CD14-positive monocyte (primary cell): ENCODE measurements at regions of chrX and their contacts with region 1.

Region 1: DNA sequence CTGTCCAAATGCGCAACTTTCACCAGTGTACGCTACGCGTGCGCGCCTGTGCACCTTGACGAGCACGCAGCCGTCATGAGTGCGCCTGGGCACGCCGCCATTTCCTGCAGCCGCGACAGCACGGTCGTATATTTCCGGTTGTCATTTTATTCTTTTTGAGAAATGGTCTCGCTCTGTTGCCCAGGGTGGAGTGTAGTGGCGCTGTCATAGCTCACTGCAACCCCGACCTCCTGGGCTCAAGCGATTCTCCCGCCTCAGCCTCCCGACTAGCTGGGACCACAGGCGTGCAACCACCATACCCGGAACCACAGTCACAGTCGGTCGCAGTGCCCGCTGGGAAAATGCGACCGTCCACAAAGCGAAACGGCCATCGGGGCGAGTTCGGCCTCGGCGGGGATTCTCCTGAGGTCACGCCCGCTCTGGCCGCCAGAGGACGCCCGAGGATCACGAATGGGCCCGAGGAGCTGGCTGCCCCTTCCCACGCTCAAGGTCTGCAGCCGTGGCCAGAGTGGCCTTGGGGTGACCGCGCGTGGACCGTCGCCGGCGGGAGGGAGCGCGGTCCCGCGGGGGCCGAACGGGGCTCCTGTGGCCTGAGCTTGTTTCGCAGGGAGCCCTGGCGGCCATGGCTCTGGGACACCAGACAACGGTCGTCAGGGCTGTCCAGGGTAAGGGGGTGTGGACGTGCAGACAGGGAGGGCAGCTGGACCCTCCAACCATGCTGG is 23.7 kb upstream of the PNMA3 start:
- DNase-seq: peak; percentile 68 to 71 (median 68)
- H3K4me3 ChIP-seq: peak overlapping the region; percentile 24 to 67 (median 48)
- H3K4me3 Mint-ChIP-seq: peak overlapping the region; percentile 81 to 88
- H3K27ac ChIP-seq: peak overlapping the region; percentile 50 to 84
- H3K27ac Mint-ChIP-seq: peak overlapping the region; percentile 87 to 97 (median 95)
- H3K4me1 ChIP-seq: peaks cover 7 to 8% of the 10 kb centered on the region in 2 donors
- H3K4me1 Mint-ChIP-seq: peaks cover 5% of the 10 kb centered on the region
- H3K27me3 ChIP-seq: no peaks in the 10 kb centered on the region
- H3K27me3 Mint-ChIP-seq: peaks cover 0 to 3% (median 0%) of the 10 kb centered on the region in 3 donors
- CTCF ChIP-seq: peak; percentile 82

Region 2: GRCh38 chrX:153507484-153508178 is 475.1 kb after region 1 on chrX:
- intact Hi-C with region 1: loop called (anchors 2 to 10 kb)
- DNase-seq: peak; percentile 60 to 69 (median 63)
- H3K4me3 ChIP-seq: no peak overlapping the region
- H3K4me3 Mint-ChIP-seq: no peak overlapping the region
- H3K27ac ChIP-seq: no peak overlapping the region
- H3K27ac Mint-ChIP-seq: no peak overlapping the region
- H3K4me1 ChIP-seq: no peaks in the 10 kb centered on the region
- H3K4me1 Mint-ChIP-seq: peaks cover 3% of the 10 kb centered on the region
- H3K27me3 ChIP-seq: no peaks in the 10 kb centered on the region
- H3K27me3 Mint-ChIP-seq: peaks cover 4 to 10% (median 4%) of the 10 kb centered on the region in 3 donors
- CTCF ChIP-seq: peak; percentile 65

Region 3: DNA sequence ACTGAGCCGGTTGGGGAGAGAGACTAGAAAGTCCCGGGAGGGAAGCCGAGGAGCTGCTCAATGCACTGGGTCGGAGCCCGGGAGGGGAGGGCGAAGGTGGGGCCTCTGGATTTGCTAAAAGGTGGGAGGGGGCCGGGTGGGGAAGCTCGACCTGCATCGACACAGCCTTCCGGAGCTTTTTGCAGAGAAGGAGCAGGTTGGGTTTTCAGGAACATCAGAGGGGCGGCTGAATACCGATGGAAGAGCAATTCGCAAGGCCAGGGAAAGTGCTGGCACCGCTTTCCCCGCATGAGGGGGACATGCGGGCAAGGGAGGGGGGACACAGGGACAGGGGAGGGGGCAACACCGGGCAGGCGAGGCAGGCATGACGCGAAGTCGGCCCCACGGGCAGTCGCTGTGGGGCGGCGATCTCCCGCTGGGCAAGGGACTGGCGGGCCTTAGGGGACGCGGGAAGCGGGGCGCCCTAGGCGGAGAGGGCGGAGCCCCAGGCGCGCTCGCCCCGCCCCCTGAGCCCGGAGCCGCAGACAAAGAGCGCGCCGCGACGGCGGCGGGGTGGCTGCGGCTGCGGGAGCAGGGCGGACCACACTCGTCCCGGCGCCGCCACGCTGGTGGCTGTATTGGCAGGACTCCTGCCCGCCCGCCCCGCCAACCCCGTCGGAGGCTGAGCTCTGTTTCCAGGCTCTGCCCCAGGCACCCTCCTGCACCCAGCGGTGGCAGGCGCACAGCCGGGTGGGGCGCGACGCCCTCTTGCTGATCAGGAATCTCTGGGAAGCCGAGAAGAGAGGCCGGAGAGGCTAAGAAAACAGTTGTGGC is 786.2 kb after region 1 on chrX:
- intact Hi-C with region 1: no loop called
- DNase-seq: peak in 2 of 3 donors; percentile 9 to 16
- H3K4me3 ChIP-seq: peak overlapping the region in 1 of 3 experiments; percentile 54
- H3K4me3 Mint-ChIP-seq: peak overlapping the region; percentile 45 to 76
- H3K27ac ChIP-seq: no peak overlapping the region
- H3K27ac Mint-ChIP-seq: no peak overlapping the region
- H3K4me1 ChIP-seq: peaks cover 3 to 10% of the 10 kb centered on the region in 2 donors
- H3K4me1 Mint-ChIP-seq: peaks cover 15% of the 10 kb centered on the region
- H3K27me3 ChIP-seq: peaks cover 16 to 48% of the 10 kb centered on the region in 2 donors
- H3K27me3 Mint-ChIP-seq: peaks cover 34 to 80% (median 77%) of the 10 kb centered on the region in 3 donors
- CTCF ChIP-seq: no peak